ENCODE measurements at regions of chr12 and their contacts with region 1.

Region 1: GRCh38 chr12:89366676-89367364 is 14.5 kb upstream of the DUSP6 start:
- DNase-seq: no peak
- H3K4me3 ChIP-seq: no peak overlapping the region
- H3K27ac ChIP-seq: no peak overlapping the region
- H3K4me1 ChIP-seq: no peaks in the 10 kb centered on the region
- H3K27me3 ChIP-seq: no peaks in the 10 kb centered on the region
- CTCF ChIP-seq: no peak
- POLR2A ChIP-seq: no peak

Region 2: DNA sequence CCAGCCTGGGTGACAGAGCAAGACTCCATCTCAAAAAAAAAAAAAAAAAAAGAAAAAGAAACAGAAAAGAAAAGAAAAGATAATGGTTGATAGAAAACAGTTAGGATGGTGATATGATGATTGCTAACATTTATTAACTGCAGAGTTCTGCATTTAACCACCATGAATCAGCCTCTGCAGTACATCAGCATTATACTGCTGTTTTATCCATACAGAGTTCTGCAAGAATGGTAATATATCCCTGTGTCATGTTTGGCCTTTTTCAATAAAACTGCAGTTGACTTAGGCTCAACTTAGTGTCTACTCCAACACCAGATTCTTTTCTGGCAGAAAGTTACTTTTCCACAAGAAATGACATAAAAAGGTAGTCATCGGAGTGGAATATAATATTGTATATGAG is 77.1 kb before region 1 on chr12:
- intact Hi-C with region 1: loop called (anchors 2 kb)
- DNase-seq: no peak
- H3K4me3 ChIP-seq: no peak overlapping the region
- H3K27ac ChIP-seq: no peak overlapping the region
- H3K4me1 ChIP-seq: no peaks in the 10 kb centered on the region
- H3K27me3 ChIP-seq: no peaks in the 10 kb centered on the region
- CTCF ChIP-seq: no peak
- POLR2A ChIP-seq: no peak

Region 3: DNA sequence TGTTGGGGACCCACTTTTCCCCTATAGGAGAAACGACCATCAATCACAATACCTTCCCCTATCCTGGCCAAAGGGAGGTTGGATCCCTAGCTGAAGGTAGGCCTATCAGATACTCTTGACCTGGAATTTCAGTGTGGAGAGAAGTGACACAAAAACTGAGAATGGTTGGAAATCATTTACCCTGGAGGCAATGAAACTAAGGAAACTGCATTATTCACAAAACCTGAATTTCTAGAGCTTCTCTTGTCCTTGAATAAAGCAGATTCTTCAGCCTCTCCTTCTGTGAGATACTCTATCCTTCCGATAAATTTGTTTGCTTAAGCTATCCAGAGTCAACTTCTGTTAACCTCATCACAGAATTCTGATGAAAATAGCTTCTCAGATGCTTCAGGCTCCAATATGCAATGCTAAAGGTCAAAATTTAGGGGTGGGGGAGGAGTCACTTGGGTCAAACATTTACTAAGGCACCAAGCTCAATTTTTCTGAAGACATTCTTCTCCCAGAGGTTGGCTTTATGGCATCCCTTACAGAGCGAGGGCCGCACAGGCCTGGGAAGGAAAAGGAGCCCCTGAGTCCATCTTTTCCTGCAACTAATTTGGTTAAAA is 12.5 kb after region 1 on chr12:
- intact Hi-C with region 1: no loop called
- DNase-seq: no peak
- H3K4me3 ChIP-seq: no peak overlapping the region
- H3K27ac ChIP-seq: no peak overlapping the region
- H3K4me1 ChIP-seq: peaks cover 1 to 7% of the 10 kb centered on the region in 2 donors
- H3K27me3 ChIP-seq: no peaks in the 10 kb centered on the region
- CTCF ChIP-seq: no peak
- POLR2A ChIP-seq: no peak

Region 4: DNA sequence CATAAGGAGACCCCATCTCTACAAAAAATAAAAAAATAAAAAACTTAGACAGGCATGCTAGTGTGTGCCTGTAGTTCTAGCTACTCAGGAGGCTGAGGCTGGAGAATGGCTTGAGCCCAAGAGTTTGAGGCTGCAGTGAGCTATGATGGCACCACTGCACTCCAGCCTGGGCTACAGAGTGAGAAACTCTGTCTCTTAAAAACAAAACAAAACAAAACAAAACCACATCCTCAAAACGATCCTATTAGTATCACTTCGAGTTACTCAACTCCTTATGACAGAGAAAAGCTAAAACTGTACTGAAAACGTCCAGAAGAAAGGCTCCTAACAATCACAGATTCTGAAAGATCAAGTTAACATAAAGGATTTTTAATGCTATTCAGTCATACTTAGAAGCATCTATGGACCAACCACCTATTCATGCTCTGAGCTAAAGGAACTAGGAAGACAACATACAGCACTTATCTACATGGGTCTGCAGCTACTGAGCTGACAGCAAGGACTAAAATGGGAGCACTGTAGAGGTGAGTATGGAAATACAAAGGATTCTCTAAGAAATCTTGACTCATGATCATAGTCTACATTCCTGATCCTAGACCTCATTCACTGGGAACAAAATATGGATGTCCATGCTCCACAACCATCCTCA is 60.8 kb after region 1 on chr12:
- intact Hi-C with region 1: no loop called
- DNase-seq: no peak
- H3K4me3 ChIP-seq: no peak overlapping the region
- H3K27ac ChIP-seq: no peak overlapping the region
- H3K4me1 ChIP-seq: no peaks in the 10 kb centered on the region
- H3K27me3 ChIP-seq: no peaks in the 10 kb centered on the region
- CTCF ChIP-seq: no peak
- POLR2A ChIP-seq: no peak

Measured in breast epithelium (tissue), 4 donors.